ENCODE measurements at regions of chr2 and their contacts with region 1.

Region 1: DNA sequence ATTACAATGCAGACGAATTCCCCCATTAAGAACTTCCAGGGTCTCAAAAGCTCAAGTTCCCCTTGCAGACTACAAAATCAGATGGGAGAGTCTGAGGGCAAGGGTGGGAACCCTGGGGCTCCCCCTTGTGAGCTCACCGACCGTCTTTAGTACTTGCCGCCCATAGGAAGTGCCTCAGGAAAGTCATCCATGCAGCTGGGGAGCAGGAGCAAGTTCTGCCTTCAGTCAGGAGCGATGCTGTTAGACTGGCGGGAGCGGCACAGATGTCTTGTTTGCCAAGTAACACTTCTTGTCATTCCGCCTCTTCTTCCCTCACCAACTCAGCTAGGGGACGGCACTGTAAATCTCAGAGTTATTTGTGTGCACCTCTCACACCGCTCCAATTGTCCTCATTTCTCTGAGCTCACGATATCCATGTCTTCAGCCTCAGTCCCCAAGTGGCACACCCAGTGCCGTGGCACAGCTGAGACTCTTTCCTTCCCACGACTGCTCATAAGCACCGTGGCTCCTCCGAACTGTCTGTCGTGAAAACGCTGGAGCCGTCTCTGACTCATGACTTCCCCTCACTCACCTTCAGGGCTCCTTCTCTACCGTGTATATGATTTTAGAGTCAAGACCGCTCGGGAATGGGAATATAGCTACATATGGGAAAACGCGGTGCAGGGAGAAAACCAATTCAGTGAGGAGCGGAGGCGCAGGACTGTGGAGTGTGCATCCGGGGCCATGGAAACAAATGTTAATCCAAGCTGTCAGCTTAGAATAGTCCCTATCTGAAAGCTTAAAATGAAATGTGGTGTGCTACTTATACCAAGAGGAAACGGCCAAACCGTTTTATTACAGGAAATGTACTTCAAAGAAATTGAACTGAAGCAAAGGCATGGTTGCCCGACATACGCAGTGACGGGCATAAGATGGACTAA is 34.0 kb downstream of the UXS1 start:
- DNase-seq: no peak
- ATAC-seq: no peak
- H3K4me3 ChIP-seq: no peak overlapping the region
- H3K27ac ChIP-seq: peak overlapping the region; percentile 65 to 93 (median 78)
- H3K4me1 ChIP-seq: peaks cover 13 to 16% of the 10 kb centered on the region in 2 donors
- H3K27me3 ChIP-seq: no peaks in the 10 kb centered on the region
- CTCF ChIP-seq: no peak
- POLR2A ChIP-seq: no peak

Region 2: GRCh38 chr2:106053116-106053515 is 107.0 kb before region 1 on chr2:
- in situ Hi-C with region 1: no loop called
- intact Hi-C with region 1: no loop called
- DNase-seq: no peak
- ATAC-seq: no peak
- H3K4me3 ChIP-seq: no peak overlapping the region
- H3K27ac ChIP-seq: no peak overlapping the region
- H3K4me1 ChIP-seq: peaks cover 0 to 7% of the 10 kb centered on the region in 2 donors
- H3K27me3 ChIP-seq: no peaks in the 10 kb centered on the region
- CTCF ChIP-seq: no peak
- POLR2A ChIP-seq: no peak

Region 3: DNA sequence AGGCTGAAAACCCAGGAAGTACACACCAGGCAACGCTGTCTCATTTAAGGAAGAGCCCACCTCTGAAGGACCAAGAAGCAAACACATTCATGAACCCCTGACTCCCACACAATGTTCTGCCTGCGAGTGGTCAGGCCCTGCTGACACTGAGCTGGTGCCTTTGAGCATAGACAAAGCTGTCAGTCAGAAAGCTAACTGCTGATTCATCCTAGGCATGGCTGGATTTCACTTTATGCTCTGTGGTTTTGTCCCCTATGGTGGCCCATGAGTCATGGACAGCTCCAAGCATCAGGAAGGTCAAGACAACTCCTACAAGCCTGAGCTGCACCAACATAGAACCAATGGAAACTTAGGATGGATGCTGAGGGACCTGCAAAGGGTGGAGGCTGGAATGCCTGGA is 44.9 kb before region 1 on chr2:
- in situ Hi-C with region 1: no loop called
- intact Hi-C with region 1: loop called (anchors 5 kb)
- DNase-seq: peak; percentile 27 to 29
- ATAC-seq: peak; percentile 51 to 58
- H3K4me3 ChIP-seq: no peak overlapping the region
- H3K27ac ChIP-seq: peak overlapping the region in 3 of 4 donors; percentile 84 to 98 (median 95)
- H3K4me1 ChIP-seq: peaks cover 27 to 34% of the 10 kb centered on the region in 2 donors
- H3K27me3 ChIP-seq: no peaks in the 10 kb centered on the region
- CTCF ChIP-seq: no peak
- POLR2A ChIP-seq: no peak